H1 (cell line): ENCODE measurements at regions of chr12 and their contacts with region 1.

Region 1: GRCh38 chr12:57462251-57462911 is 2.8 kb downstream of the GLI1 start:
- DNase-seq: peak; percentile 84 to 96
- H3K4me3 ChIP-seq: peak overlapping the region; percentile 72 to 91 (median 86)
- H3K27ac ChIP-seq: peak overlapping the region; percentile 80
- H3K4me1 ChIP-seq: peaks cover 0 to 7% (median 1%) of the 10 kb centered on the region in 4 experiments; a peak in 3 of 7 replicates
- H3K27me3 ChIP-seq: no peaks in the 10 kb centered on the region
- CTCF ChIP-seq: peak in 2 of 3 experiments; percentile 97 to 98; a peak in 3 of 4 replicates
- EP300 ChIP-seq: no peak
- POLR2A ChIP-seq: peak in 1 of 2 experiments; percentile 60; a peak in 2 of 3 replicates
- RAD21 ChIP-seq: peak; percentile 78 to 87

Region 2: DNA sequence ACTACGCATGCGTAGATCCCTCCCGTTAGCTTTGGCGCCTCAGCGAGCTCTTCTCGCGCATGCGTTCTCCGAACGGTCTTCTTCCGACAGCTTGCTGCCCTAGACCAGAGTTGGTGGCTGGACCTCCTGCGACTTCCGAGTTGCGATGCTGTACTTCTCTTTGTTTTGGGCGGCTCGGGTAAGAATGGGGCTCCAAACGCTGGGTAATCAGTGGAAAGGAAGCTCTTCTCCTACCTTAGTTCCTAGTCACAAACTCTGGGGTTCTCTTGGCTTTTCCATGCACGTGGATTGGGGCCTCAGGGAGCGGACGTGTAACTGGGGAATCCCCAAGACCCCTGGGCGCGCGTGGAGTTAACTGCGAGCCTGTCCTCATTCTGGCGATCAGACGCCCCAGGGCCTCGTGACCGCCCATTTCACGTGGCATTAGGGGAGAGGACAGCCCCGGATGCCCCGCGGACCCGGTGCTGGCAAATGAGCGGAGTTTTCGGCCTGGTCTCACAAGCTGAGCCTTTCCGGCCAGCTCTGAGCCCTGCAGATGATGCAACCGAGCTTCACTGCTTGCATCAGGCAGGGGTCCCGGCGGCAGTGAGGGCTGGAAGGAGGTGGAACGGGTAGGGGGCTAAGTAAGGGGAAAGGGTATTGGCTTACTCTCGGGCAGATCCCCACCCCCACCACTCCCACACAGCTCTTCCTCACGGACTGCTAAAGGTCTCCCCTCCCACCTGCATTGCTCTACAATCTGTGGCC is 232.6 kb before region 1 on chr12 and contains the start of gene SHMT2:
- CTCF ChIA-PET with region 1: interaction called, 8 read pairs
- POLR2A ChIA-PET with region 1: interaction called, 51 read pairs
- DNase-seq: peak; percentile 91 to 94
- H3K4me3 ChIP-seq: peak within 1 kb of the TSS; percentile 69 to 93 (median 81)
- H3K27ac ChIP-seq: peak within 1 kb of the TSS; percentile 85
- H3K4me1 ChIP-seq: peaks cover 4 to 43% (median 21%) of the 10 kb centered on the region in 4 experiments
- H3K27me3 ChIP-seq: peaks cover 11 to 32% (median 26%) of the 10 kb centered on the region in 4 experiments
- CTCF ChIP-seq: no peak
- EP300 ChIP-seq: 0 out of 3 replicates have a peak, but pooled peaks of 1 of the 2 experiments have one; percentile 37
- POLR2A ChIP-seq: peak in 1 of 2 experiments; percentile 68; a peak in 2 of 3 replicates
- RAD21 ChIP-seq: no peak
- total RNA-seq, gene SHMT2: 274 and 283 TPM in 2 replicates

Region 3: GRCh38 chr12:57238854-57239554 is 223.4 kb before region 1 on chr12:
- CTCF ChIA-PET with region 1: interaction called, 225 read pairs
- POLR2A ChIA-PET with region 1: interaction called, 51 read pairs
- DNase-seq: peak in 1 of 2 experiments; percentile 98
- H3K4me3 ChIP-seq: peak overlapping the region; percentile 42 to 67 (median 54)
- H3K27ac ChIP-seq: no peak overlapping the region
- H3K4me1 ChIP-seq: peaks cover 6 to 68% (median 45%) of the 10 kb centered on the region in 4 experiments
- H3K27me3 ChIP-seq: peaks cover 59 to 80% (median 74%) of the 10 kb centered on the region in 4 experiments
- CTCF ChIP-seq: peak in 2 of 3 experiments; percentile 100; a peak in 3 of 4 replicates
- EP300 ChIP-seq: peak in 1 of 2 experiments; percentile 59; a peak in 1 of 3 replicates
- POLR2A ChIP-seq: peak in 1 of 2 experiments; percentile 24; a peak in 1 of 3 replicates
- RAD21 ChIP-seq: peak; percentile 85 to 91

Region 4: DNA sequence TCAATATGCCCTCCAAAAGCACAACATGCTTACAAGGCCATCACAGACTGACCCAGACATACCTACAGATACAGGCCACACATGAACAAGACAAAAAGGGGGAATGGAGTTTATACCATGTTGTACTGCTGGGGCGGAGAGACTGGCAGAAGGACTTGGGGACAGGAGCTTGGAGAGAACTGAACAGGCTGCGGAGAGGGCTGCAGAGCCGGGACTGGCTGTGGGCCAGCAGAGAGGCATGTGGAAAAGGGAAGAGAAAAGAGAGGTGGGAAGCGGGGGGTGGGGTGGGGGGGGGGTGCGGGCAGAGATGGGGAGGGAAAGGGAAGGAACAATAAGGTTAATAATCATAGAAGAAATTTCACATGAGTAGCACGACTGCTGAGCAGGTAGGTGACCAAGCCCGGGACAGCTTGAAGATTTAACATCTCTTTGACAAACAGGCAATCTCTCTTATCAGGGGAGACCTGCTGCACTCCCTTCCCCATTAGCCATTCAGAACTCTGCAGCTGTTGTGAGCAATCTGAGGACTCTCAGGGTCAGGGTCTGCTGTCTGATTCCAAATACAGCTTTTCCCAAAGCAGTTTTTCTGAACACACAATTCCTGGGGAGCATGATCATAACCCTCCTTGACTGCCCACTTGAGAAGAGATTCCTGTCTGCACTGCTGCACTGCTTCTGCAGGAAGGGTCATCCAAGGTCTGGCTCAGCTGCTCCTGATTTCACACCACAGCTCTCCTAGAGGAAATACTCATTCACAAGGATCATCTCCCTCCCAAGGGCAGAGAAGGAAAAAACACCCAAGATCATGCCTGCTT is 189.8 kb before region 1 on chr12:
- CTCF ChIA-PET with region 1: interaction called, 32 read pairs
- POLR2A ChIA-PET with region 1: interaction called, 6 read pairs
- DNase-seq: no peak
- H3K4me3 ChIP-seq: no peak overlapping the region
- H3K27ac ChIP-seq: no peak overlapping the region
- H3K4me1 ChIP-seq: no peaks in the 10 kb centered on the region; a peak in 1 of 7 replicates
- H3K27me3 ChIP-seq: no peaks in the 10 kb centered on the region
- CTCF ChIP-seq: no peak
- EP300 ChIP-seq: no peak
- POLR2A ChIP-seq: no peak
- RAD21 ChIP-seq: no peak

Region 5: DNA sequence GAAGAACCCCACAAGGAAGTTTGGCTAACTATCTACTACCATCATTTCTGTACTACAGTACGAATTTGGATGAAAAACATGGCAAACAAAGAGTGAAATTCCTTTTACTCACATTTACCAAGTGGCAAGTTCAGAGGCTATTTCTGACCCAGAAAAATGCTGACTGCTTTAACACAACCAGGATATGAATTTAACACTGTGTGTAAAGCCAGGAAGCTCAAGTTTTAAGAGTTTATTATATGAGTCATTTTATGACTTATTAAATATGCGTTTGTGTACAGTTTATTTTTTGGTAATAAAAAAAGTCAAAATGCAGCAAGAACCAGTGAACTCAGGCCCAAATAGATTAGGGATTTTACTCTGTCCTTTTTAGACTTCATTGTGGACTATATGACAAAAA is 153.0 kb before region 1 on chr12:
- CTCF ChIA-PET with region 1: interaction called, 478 read pairs
- POLR2A ChIA-PET with region 1: interaction called, 6 read pairs
- DNase-seq: no peak
- H3K4me3 ChIP-seq: no peak overlapping the region
- H3K27ac ChIP-seq: no peak overlapping the region
- H3K4me1 ChIP-seq: no peaks in the 10 kb centered on the region
- H3K27me3 ChIP-seq: no peaks in the 10 kb centered on the region
- CTCF ChIP-seq: no peak
- EP300 ChIP-seq: no peak
- POLR2A ChIP-seq: no peak
- RAD21 ChIP-seq: no peak

Region 6: GRCh38 chr12:57430931-57431720 is 31.3 kb before region 1 on chr12 and contains the start of gene R3HDM2:
- CTCF ChIA-PET with region 1: interaction called, 7 read pairs
- POLR2A ChIA-PET with region 1: interaction called, 15 read pairs
- DNase-seq: peak; percentile 90 to 99
- H3K4me3 ChIP-seq: peak within 1 kb of the TSS; percentile 55 to 73 (median 70)
- H3K27ac ChIP-seq: peak within 1 kb of the TSS; percentile 81; the same call in 1 of the 2 replicates
- H3K4me1 ChIP-seq: peaks cover 0 to 5% (median 2%) of the 10 kb centered on the region in 4 experiments; a peak in 5 of 7 replicates
- H3K27me3 ChIP-seq: no peaks in the 10 kb centered on the region
- CTCF ChIP-seq: no peak
- EP300 ChIP-seq: peak in 1 of 2 experiments; percentile 47; a peak in 1 of 3 replicates
- POLR2A ChIP-seq: peak in 1 of 2 experiments; percentile 87; a peak in 2 of 3 replicates
- RAD21 ChIP-seq: no peak
- total RNA-seq, gene R3HDM2: 23.7 and 27.0 TPM in 2 replicates

Region 7: DNA sequence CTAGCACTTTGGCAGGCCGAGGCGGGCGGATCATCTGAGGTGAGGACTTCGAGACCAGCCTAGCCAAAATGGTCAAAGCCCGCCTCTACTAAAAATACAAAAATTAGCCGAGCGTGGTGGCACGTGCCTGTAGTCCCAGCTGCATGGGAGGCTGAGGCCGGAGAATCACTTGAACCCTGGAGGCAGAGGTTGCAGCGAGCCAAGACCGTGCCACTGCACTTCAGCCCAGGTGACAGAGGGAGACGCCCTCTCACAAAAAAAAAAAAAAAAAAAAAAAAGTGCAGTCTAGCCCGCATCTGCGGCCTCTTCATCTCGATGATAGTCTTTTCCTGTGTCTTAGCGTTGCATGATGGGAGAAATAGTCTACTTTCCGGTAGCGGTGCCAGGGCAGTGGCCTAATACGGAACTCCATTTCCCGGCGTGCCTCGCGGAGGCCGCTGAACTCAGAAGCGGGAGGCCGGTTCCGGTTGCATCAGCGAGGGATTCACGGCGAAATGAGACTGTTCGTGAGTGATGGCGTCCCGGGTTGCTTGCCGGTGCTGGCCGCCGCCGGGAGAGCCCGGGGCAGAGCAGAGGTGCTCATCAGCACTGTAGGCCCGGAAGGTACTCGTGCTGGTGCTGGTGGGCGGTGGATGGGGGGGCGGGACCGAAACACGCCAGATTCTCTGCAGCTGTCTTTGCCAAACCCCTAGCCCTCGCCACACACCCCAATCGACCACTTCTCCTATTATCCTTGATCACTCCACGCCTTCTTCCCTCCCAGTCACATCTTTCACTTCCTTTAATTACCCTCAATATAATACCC is 25.4 kb after region 1 on chr12 and contains the start of gene MARS1:
- CTCF ChIA-PET with region 1: interaction called, 441 read pairs
- POLR2A ChIA-PET with region 1: no interaction called
- DNase-seq: peak; percentile 85 to 88
- H3K4me3 ChIP-seq: peak within 1 kb of the TSS; percentile 77 to 99 (median 94)
- H3K27ac ChIP-seq: peak within 1 kb of the TSS; percentile 93
- H3K4me1 ChIP-seq: peaks cover 0 to 7% (median 2%) of the 10 kb centered on the region in 4 experiments; a peak in 5 of 7 replicates
- H3K27me3 ChIP-seq: no peaks in the 10 kb centered on the region
- CTCF ChIP-seq: peak; percentile 40 to 61 (median 41)
- EP300 ChIP-seq: no peak
- POLR2A ChIP-seq: peak; percentile 77 to 97
- RAD21 ChIP-seq: no peak; a peak in 1 of 4 replicates
- total RNA-seq, gene MARS1: 398 and 407 TPM in 2 replicates

Region 8: DNA sequence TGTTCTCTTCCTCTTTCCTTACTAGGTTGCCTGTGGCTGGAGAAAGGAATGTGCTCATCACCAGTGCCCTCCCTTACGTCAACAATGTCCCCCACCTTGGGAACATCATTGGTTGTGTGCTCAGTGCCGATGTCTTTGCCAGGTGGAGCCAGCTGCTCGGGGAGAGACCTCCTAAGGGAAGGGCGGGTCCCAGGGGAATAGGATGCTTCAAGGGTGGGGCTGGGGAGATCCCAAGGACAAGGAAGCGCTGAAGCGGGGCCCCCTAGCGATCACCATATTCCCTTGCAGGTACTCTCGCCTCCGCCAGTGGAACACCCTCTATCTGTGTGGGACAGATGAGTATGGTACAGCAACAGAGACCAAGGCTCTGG is 35.7 kb after region 1 on chr12:
- CTCF ChIA-PET with region 1: no interaction called
- POLR2A ChIA-PET with region 1: no interaction called
- DNase-seq: peak in 1 of 2 experiments; percentile 56
- H3K4me3 ChIP-seq: no peak overlapping the region
- H3K27ac ChIP-seq: no peak overlapping the region
- H3K4me1 ChIP-seq: no peaks in the 10 kb centered on the region
- H3K27me3 ChIP-seq: no peaks in the 10 kb centered on the region
- CTCF ChIP-seq: peak; percentile 23 to 27 (median 26); a peak in 3 of 4 replicates
- EP300 ChIP-seq: no peak
- POLR2A ChIP-seq: no peak
- RAD21 ChIP-seq: no peak

Region 9: DNA sequence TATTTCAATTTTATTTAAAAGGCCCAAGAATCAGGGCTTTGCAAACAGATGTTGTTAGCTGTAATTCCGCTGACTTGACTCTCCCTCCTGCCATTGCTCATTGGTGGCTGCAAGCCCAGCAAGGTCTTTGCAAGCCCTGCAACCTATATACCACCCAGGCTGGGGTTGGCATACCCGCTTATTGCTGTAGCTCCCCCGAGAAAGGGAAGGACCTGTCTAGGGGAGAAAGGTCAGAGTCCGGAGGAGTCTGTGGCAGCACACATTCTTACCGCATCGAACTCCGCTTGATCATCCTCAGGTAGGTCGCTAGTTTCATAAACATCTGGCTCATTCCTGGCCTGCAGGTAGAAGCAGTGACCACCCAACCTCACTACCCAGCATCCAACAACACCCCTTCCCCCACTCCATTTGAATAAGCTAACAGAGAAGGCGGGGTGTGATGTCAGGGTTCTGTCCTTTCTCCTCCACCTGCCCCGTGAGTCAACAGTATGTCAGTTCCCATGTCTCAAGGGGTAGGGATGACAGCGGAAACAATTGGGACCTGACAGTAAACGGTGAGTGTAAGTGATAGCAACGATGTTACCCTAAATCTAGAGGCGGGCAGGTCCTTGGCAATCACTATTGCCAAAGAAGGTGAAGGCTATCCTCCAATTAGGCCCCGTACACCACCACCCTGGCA is 83.5 kb after region 1 on chr12:
- CTCF ChIA-PET with region 1: no interaction called
- POLR2A ChIA-PET with region 1: no interaction called
- DNase-seq: no peak
- H3K4me3 ChIP-seq: peak overlapping the region; percentile 63 to 90 (median 81); a peak in 7 of 8 replicates
- H3K27ac ChIP-seq: 0 out of 2 replicates have a peak overlapping the region, but pooled peaks have one; percentile 16
- H3K4me1 ChIP-seq: peaks cover 3 to 14% (median 8%) of the 10 kb centered on the region in 4 experiments; a peak in 6 of 7 replicates
- H3K27me3 ChIP-seq: peaks cover 0 to 5% (median 3%) of the 10 kb centered on the region in 4 experiments; a peak in 2 of 7 replicates
- CTCF ChIP-seq: no peak
- EP300 ChIP-seq: no peak
- POLR2A ChIP-seq: no peak
- RAD21 ChIP-seq: no peak